ENCODE measurements at regions of chr11 and their contacts with region 1.

Region 1: GRCh38 chr11:75204685-75205563 is 35.6 kb upstream of the TPBGL start:
- DNase-seq: peak; percentile 51 to 83 (median 70)
- H3K4me3 ChIP-seq: no peak overlapping the region
- H3K4me3 Mint-ChIP-seq: no peak overlapping the region
- H3K27ac ChIP-seq: no peak overlapping the region
- H3K27ac Mint-ChIP-seq: peak overlapping the region in 1 of 8 donors; percentile 49
- H3K4me1 ChIP-seq: no peaks in the 10 kb centered on the region
- H3K4me1 Mint-ChIP-seq: no peaks in the 10 kb centered on the region
- H3K27me3 ChIP-seq: no peaks in the 10 kb centered on the region
- H3K27me3 Mint-ChIP-seq: peaks cover 2 to 11% of the 10 kb centered on the region in 2 donors

Region 2: GRCh38 chr11:75133976-75134375 is 70.9 kb before region 1 on chr11:
- CTCF ChIA-PET with region 1: interaction called, 201 read pairs
- POLR2A ChIA-PET with region 1: no interaction called
- DNase-seq: no peak
- H3K4me3 ChIP-seq: no peak overlapping the region
- H3K4me3 Mint-ChIP-seq: no peak overlapping the region
- H3K27ac ChIP-seq: no peak overlapping the region
- H3K27ac Mint-ChIP-seq: peak overlapping the region in 1 of 8 donors; percentile 20
- H3K4me1 ChIP-seq: no peaks in the 10 kb centered on the region
- H3K4me1 Mint-ChIP-seq: no peaks in the 10 kb centered on the region
- H3K27me3 ChIP-seq: no peaks in the 10 kb centered on the region
- H3K27me3 Mint-ChIP-seq: peaks cover 15 to 27% of the 10 kb centered on the region in 2 donors

Region 3: DNA sequence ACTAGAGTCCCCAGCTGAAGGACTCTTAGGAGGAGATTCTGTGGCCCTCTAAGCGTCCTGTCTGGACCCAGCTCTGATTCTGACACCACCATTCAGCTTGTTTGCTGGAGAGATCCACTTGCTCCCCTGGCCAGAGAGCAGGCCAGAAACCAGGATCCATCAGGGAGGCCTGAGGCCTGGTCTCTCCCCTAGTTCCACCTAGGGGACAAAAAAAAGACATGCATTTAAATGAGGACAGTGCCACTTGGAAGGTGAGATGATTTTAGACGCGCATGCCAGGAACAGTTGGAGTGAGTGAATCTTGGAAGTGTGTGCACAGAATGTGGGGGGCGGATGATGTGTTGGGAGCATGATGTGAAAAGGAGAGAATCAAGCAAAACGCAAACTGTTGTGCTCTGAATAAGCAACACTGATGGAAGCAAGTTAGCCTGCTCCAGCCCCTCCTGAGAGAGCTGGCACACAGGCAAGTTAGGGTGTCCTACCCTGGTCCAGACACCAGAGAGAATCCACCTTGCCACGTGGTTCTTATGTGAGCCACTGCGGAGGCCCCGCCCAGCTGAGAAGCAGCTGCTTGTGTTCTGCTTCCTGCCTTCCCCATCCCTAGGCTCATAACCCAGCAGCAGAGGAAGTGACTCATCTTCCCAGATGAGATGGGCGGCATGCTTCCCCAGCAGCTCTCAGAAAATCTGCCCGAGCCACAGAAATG is 62.1 kb before region 1 on chr11:
- CTCF ChIA-PET with region 1: interaction called, 201 read pairs
- POLR2A ChIA-PET with region 1: interaction called, 5 read pairs
- DNase-seq: peak; percentile 43 to 78 (median 46)
- H3K4me3 ChIP-seq: peak overlapping the region; percentile 16
- H3K4me3 Mint-ChIP-seq: peak overlapping the region in 6 of 7 donors; percentile 22 to 78 (median 71)
- H3K27ac ChIP-seq: peak overlapping the region; percentile 10
- H3K27ac Mint-ChIP-seq: peak overlapping the region; percentile 57 to 95 (median 78)
- H3K4me1 ChIP-seq: peaks cover 37% of the 10 kb centered on the region
- H3K4me1 Mint-ChIP-seq: peaks cover 39 to 42% (median 40%) of the 10 kb centered on the region in 3 donors
- H3K27me3 ChIP-seq: no peaks in the 10 kb centered on the region
- H3K27me3 Mint-ChIP-seq: peaks cover 2% of the 10 kb centered on the region in 2 donors

Region 4: GRCh38 chr11:75150879-75151278 is 54.0 kb before region 1 on chr11 and contains the start of gene SLCO2B1:
- CTCF ChIA-PET with region 1: interaction called, 201 read pairs
- POLR2A ChIA-PET with region 1: no interaction called
- DNase-seq: no peak
- H3K4me3 ChIP-seq: no peak within 1 kb of the TSS
- H3K4me3 Mint-ChIP-seq: no peak within 1 kb of the TSS
- H3K27ac ChIP-seq: no peak within 1 kb of the TSS
- H3K27ac Mint-ChIP-seq: peak within 1 kb of the TSS in 2 of 8 donors; percentile 35 to 80
- H3K4me1 ChIP-seq: no peaks in the 10 kb centered on the region
- H3K4me1 Mint-ChIP-seq: no peaks in the 10 kb centered on the region
- H3K27me3 ChIP-seq: no peaks in the 10 kb centered on the region
- H3K27me3 Mint-ChIP-seq: peaks cover 7 to 21% of the 10 kb centered on the region in 2 donors
- total RNA-seq, gene SLCO2B1: 0.98 to 1.3 TPM

Region 5: GRCh38 chr11:75241036-75241905 is 36.3 kb after region 1 on chr11:
- CTCF ChIA-PET with region 1: interaction called, 15 read pairs
- POLR2A ChIA-PET with region 1: no interaction called
- DNase-seq: peak; percentile 77 to 84 (median 83)
- H3K4me3 ChIP-seq: no peak overlapping the region
- H3K4me3 Mint-ChIP-seq: peak overlapping the region; percentile 68 to 89 (median 74)
- H3K27ac ChIP-seq: no peak overlapping the region
- H3K27ac Mint-ChIP-seq: no peak overlapping the region
- H3K4me1 ChIP-seq: peaks cover 8% of the 10 kb centered on the region
- H3K4me1 Mint-ChIP-seq: peaks cover 0 to 23% (median 5%) of the 10 kb centered on the region in 3 donors
- H3K27me3 ChIP-seq: peaks cover 20% of the 10 kb centered on the region
- H3K27me3 Mint-ChIP-seq: peaks cover 25 to 49% of the 10 kb centered on the region in 2 donors

Region 6: GRCh38 chr11:75248690-75249268 is 43.9 kb after region 1 on chr11:
- CTCF ChIA-PET with region 1: interaction called, 10 read pairs
- POLR2A ChIA-PET with region 1: no interaction called
- DNase-seq: peak; percentile 77 to 88 (median 78)
- H3K4me3 ChIP-seq: no peak overlapping the region
- H3K4me3 Mint-ChIP-seq: no peak overlapping the region
- H3K27ac ChIP-seq: no peak overlapping the region
- H3K27ac Mint-ChIP-seq: no peak overlapping the region
- H3K4me1 ChIP-seq: no peaks in the 10 kb centered on the region
- H3K4me1 Mint-ChIP-seq: no peaks in the 10 kb centered on the region
- H3K27me3 ChIP-seq: no peaks in the 10 kb centered on the region
- H3K27me3 Mint-ChIP-seq: peaks cover 15% of the 10 kb centered on the region in 2 donors